CD8-positive, alpha-beta T cell (primary cell): ENCODE measurements at regions of chr6 and their contacts with region 1.

Region 1: GRCh38 chr6:25556516-25556915 is 95.5 kb upstream of the SCGN start:
- DNase-seq: peak; percentile 61 to 83 (median 76)
- ATAC-seq: peak; percentile 54
- H3K4me3 ChIP-seq: no peak overlapping the region
- H3K4me3 Mint-ChIP-seq: no peak overlapping the region
- H3K27ac ChIP-seq: no peak overlapping the region
- H3K27ac Mint-ChIP-seq: no peak overlapping the region
- H3K4me1 ChIP-seq: no peaks in the 10 kb centered on the region
- H3K4me1 Mint-ChIP-seq: peaks cover 2% of the 10 kb centered on the region
- H3K27me3 ChIP-seq: no peaks in the 10 kb centered on the region
- H3K27me3 Mint-ChIP-seq: no peaks in the 10 kb centered on the region
- CTCF ChIP-seq: peak; percentile 93

Region 2: GRCh38 chr6:25511376-25511775 is 45.1 kb before region 1 on chr6:
- CTCF ChIA-PET with region 1: interaction called, 10 read pairs
- POLR2A ChIA-PET with region 1: no interaction called
- intact Hi-C with region 1: no loop called
- DNase-seq: no peak
- ATAC-seq: no peak
- H3K4me3 ChIP-seq: no peak overlapping the region
- H3K4me3 Mint-ChIP-seq: no peak overlapping the region
- H3K27ac ChIP-seq: no peak overlapping the region
- H3K27ac Mint-ChIP-seq: no peak overlapping the region
- H3K4me1 ChIP-seq: no peaks in the 10 kb centered on the region
- H3K4me1 Mint-ChIP-seq: no peaks in the 10 kb centered on the region
- H3K27me3 ChIP-seq: no peaks in the 10 kb centered on the region
- H3K27me3 Mint-ChIP-seq: no peaks in the 10 kb centered on the region
- CTCF ChIP-seq: no peak

Region 3: GRCh38 chr6:25542984-25543910 is 13.3 kb before region 1 on chr6:
- CTCF ChIA-PET with region 1: interaction called, 24 read pairs
- POLR2A ChIA-PET with region 1: no interaction called
- intact Hi-C with region 1: no loop called
- DNase-seq: no peak
- ATAC-seq: no peak
- H3K4me3 ChIP-seq: no peak overlapping the region
- H3K4me3 Mint-ChIP-seq: no peak overlapping the region
- H3K27ac ChIP-seq: no peak overlapping the region
- H3K27ac Mint-ChIP-seq: no peak overlapping the region
- H3K4me1 ChIP-seq: no peaks in the 10 kb centered on the region
- H3K4me1 Mint-ChIP-seq: no peaks in the 10 kb centered on the region
- H3K27me3 ChIP-seq: no peaks in the 10 kb centered on the region
- H3K27me3 Mint-ChIP-seq: no peaks in the 10 kb centered on the region
- CTCF ChIP-seq: no peak

Region 4: DNA sequence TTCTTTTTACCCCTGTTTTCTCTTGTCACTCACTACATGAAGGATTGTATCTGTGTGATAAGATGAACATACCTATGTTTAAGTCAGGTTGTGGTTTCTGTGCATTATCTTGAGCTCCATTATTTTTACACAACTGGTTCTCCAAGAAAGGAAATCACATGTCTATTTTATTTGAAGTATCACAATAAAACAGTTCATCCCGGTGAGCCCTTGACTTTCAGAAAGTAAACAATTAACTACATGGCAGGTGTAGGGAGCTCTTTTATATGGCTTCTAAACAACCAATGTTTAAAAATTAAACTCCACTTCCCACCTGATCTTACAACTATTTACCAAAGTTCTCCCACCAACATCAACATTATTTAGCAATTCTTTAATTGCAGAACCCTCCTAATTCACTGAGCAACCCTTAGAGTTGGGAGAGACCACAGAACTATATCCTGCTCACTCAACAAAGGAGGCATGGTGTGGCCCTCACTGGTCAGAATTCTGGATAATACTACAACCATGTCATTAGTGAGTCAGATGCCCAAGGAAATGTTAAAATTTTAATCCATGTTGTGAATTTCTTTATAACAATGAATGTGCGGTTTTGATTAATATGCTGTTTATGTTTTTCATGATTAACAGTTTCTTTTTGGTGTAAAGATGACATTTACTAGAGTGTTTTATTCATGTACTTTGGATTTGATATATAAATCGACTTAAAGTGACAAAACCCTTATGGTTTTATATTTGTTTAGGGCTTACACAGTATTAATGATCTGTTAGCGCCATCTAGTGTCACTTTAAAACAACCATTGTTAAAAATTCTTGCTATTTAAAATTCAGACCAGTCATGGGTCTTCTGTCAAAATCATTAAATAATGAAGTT is 45.5 kb after region 1 on chr6:
- CTCF ChIA-PET with region 1: interaction called, 6 read pairs
- POLR2A ChIA-PET with region 1: no interaction called
- intact Hi-C with region 1: loop called (anchors 2 to 5 kb)
- DNase-seq: peak in 2 of 9 experiments; percentile 59 to 72
- ATAC-seq: no peak
- H3K4me3 ChIP-seq: no peak overlapping the region
- H3K4me3 Mint-ChIP-seq: no peak overlapping the region
- H3K27ac ChIP-seq: no peak overlapping the region
- H3K27ac Mint-ChIP-seq: no peak overlapping the region
- H3K4me1 ChIP-seq: no peaks in the 10 kb centered on the region
- H3K4me1 Mint-ChIP-seq: peaks cover 3% of the 10 kb centered on the region
- H3K27me3 ChIP-seq: no peaks in the 10 kb centered on the region
- H3K27me3 Mint-ChIP-seq: no peaks in the 10 kb centered on the region
- CTCF ChIP-seq: peak; percentile 81